K562 (cell line): ENCODE measurements at regions of chr17 and their contacts with region 1.

Region 1: GRCh38 chr17:18025945-18026776 is 12.8 kb downstream of the ATPAF2 start:
- DNase-seq: no peak
- ATAC-seq: no peak
- H3K4me3 ChIP-seq: no peak overlapping the region
- H3K27ac ChIP-seq: no peak overlapping the region; the same call in 2 of the 3 replicates
- H3K4me1 ChIP-seq: peaks cover 0 to 12% of the 10 kb centered on the region in 2 experiments; a peak in 3 of 5 replicates
- H3K27me3 ChIP-seq: no peaks in the 10 kb centered on the region
- CTCF ChIP-seq: no peak
- EP300 ChIP-seq: no peak
- POLR2A ChIP-seq: no peak
- RAD21 ChIP-seq: no peak

Region 2: DNA sequence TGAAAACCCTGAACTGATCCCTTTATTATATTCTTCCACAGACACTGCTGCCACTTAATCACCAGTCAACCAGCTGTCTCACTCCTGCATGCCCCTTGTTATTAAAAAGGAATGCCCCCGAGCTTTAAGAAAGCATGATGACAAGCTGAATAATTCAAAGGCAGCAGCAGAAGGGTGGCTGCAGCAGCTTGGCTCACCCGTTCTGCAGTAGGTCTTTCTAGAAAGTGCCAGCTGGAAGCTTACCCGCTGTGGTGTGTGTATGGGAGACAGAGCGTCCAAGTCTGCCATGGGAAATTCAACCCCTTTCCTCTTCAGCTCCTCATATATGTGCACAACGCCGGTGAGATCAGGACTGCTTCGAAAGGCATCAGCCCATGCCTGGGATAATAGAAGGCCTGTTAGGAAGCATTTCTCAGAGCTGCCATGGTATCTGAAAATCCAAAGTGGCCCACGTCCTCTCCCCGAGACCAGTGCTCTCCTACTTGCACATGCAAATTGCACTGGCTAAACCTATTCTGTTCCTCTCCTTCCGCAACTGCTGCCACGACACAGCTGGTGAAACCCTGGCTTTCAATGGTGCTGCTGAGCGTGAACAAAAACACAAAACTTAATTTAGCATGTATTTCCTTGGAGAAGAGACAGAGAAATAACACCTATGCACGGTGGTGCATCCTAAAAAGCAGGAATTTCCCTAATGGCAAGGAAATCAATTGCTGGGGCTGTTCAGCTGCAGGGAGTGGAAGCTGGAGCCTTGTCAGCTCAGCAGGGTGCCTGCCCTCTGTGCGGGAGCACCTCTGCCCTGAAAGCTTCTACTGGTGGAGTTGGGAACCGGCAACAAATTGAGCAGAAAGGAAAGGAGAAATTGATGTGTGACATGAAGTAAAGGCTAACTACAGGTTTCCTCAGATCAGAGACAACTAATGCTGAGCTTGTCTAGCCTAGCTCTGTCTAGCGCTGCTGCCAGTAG is 141.5 kb before region 1 on chr17:
- CTCF ChIA-PET with region 1: interaction called, 5 read pairs
- POLR2A ChIA-PET with region 1: no interaction called
- in situ Hi-C with region 1: loop called (anchors 5 kb)
- intact Hi-C with region 1: no loop called
- DNase-seq: no peak
- ATAC-seq: no peak
- H3K4me3 ChIP-seq: no peak overlapping the region
- H3K27ac ChIP-seq: no peak overlapping the region
- H3K4me1 ChIP-seq: no peaks in the 10 kb centered on the region; a peak in 1 of 5 replicates
- H3K27me3 ChIP-seq: no peaks in the 10 kb centered on the region
- CTCF ChIP-seq: no peak
- EP300 ChIP-seq: no peak
- POLR2A ChIP-seq: no peak
- RAD21 ChIP-seq: no peak